ENCODE measurements at regions of chr10 and their contacts with region 1.

Region 1: GRCh38 chr10:32378363-32379317 is 31.7 kb upstream of the EPC1 start:
- DNase-seq: peak; percentile 94
- ATAC-seq: peak; percentile 99

Region 2: DNA sequence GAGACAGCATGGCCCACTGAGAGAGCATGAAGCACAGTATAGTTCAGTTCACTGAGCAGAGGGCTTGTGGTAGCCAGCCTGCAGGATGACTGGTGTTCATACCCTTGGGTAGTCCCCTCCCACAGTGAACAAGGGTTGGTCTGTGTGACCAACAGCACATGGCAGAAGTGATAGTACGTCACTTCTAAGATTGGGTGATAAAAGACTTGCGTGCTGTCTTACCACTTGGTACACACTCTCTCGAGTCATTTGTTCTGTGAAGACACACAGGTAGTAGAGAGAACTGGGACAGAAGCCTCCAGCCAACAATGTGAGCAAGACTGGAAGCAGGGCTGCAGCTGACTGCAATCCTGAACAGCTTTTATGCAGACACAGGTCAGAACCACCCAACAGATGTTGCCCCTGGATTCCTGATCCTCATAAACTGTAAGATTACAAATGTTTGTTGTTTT is 46.3 kb before region 1 on chr10:
- intact Hi-C with region 1: no loop called
- DNase-seq: no peak
- ATAC-seq: peak; percentile 66 to 71

Region 3: GRCh38 chr10:32445740-32446535 is 67.3 kb after region 1 on chr10 and contains the start of gene CCDC7:
- intact Hi-C with region 1: loop called in 1 of 2 experiments (anchors 2 kb)
- DNase-seq: peak; percentile 91
- ATAC-seq: peak; percentile 98 to 99
- total RNA-seq, gene CCDC7: 25.7 to 29.3 TPM

Region 4: DNA sequence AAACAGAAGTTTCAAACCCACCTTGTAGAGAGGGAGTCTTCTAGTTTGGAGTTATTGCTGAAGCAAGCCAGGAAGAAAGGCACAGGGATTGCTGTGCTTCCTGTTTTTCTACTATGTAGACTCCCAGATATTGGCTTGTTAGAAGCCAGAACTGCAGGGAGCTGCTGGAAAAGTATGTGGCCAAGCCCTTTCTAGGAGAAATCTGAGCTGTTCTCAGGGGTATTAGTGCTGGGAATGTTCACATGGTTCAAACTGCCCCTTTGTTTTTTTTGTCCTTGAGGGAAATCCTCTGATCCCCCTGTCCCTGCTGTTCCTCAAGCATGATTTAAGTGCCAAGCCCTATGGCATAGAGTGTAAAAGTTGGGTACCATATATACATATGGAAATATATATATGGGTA is 251.3 kb after region 1 on chr10:
- intact Hi-C with region 1: no loop called
- DNase-seq: no peak
- ATAC-seq: no peak